Dorsolateral prefrontal cortex (tissue), 120 donors: ENCODE measurements at regions of chr3 and their contacts with region 1.

Region 1: GRCh38 chr3:127598841-127599570 is 795 bp downstream of the MCM2 start:
- DNase-seq: no peak
- H3K4me3 ChIP-seq: peak overlapping the region in 58 of 59 donors; percentile 55 to 96 (median 72)
- H3K27ac ChIP-seq: peak overlapping the region in 11 of 59 donors; percentile 28 to 83 (median 66)
- H3K27me3 ChIP-seq: no peaks in the 10 kb centered on the region
- CTCF ChIP-seq: no peak

Region 2: DNA sequence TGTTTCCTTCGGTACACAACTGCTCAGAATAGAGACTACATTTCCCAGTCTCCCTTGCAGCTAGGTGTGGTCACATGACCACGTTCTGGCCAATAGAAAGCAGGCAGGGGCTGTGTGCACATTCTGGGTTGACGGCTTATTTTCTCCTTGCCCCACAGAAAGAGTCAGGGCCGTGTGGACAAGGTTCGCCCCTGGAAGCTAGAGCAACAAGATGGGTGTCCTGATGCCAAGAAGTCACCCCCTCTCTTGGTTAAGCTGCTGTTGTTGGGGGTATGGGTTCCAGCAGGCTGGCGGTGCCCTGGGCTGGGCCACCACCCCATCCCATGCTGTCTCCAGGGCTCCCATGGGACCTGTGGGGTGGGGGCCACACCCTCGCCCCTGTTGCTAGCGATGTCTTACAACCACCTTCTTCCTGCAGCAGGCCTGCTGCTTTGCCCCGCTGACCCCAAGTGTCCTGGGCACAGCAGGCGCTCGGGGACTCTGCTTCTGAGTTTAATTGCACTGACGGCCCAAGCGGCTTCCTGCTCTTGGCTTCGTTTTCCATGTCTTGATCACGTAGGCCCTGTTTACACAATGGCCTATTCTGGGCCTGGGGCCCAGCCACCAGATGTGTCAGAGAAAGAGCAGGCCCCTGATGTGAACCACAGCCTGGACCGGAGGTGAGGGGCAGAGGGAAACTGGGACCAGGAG is 98.7 kb after region 1 on chr3:
- intact Hi-C with region 1: loop called in 1 of 2 experiments (anchors 5 kb)
- DNase-seq: peak; percentile 76 to 92 (median 82)
- H3K4me3 ChIP-seq: peak overlapping the region in 58 of 59 donors; percentile 11 to 68 (median 46)
- H3K27ac ChIP-seq: peak overlapping the region; percentile 71 to 97 (median 91)
- H3K27me3 ChIP-seq: no peaks in the 10 kb centered on the region
- CTCF ChIP-seq: peak in 8 of 56 donors; percentile 5 to 26 (median 18)

Region 3: GRCh38 chr3:127817396-127817841 is 218.4 kb after region 1 on chr3:
- intact Hi-C with region 1: loop called (anchors 5 to 10 kb)
- DNase-seq: peak in 1 of 10 donors; percentile 41
- H3K4me3 ChIP-seq: peak overlapping the region in 5 of 59 donors; percentile 1 to 27 (median 19)
- H3K27ac ChIP-seq: peak overlapping the region in 48 of 59 donors; percentile 2 to 93 (median 62)
- H3K27me3 ChIP-seq: no peaks in the 10 kb centered on the region
- CTCF ChIP-seq: no peak